Motor neuron (in vitro differentiated cells): ENCODE measurements at regions of chr14 and their contacts with region 1.

Region 1: DNA sequence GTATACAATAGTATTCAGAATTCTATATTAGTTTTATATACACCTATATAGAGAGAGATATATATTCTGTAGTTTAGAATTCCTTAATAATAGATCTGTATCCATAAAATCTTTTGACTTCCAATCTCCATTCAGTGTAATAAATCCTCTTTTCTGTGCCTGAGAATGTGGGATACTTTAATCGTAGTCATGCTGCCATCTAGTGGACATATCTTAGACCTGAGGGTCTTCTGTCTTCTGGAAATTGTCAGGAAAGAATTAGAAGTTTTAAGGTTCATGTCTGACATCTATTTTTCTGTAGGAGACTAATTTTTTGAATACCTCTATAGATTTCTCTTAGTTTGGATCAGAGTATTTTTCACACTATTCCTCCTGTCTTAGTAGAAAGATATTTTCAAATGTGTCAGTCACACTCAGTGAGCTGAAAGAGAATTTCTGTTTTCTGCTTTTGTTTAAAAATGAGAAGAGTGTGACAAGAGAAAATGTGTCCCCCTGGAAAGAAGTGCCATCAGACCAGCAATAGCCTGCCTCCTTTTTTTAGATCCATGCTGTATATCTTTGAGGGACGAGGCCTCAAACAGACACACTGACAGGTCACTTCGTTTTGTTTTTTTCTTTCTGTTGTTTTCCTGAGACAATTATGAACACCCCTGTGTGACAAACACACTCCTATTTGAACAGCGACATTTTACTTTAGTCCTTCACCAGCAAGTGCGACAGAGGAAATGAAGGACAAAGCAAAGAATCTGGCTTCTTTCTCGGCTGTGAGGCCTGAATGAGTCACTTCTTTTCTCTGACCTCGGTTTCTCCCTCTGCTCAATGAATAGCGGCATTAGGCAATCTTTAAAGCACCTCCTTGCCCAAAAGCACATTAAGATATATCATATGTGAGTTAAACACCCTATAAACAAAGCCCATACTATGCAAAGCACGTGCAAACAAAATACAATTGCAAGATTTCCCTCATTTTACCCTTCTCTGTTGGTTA is 96.3 kb downstream of the GALC start:
- ATAC-seq: peak; percentile 47 to 83 (median 66)
- H3K4me3 ChIP-seq: no peak overlapping the region
- H3K27ac ChIP-seq: no peak overlapping the region
- H3K4me1 ChIP-seq: peaks cover 0 to 5% of the 10 kb centered on the region in 2 donors

Region 2: DNA sequence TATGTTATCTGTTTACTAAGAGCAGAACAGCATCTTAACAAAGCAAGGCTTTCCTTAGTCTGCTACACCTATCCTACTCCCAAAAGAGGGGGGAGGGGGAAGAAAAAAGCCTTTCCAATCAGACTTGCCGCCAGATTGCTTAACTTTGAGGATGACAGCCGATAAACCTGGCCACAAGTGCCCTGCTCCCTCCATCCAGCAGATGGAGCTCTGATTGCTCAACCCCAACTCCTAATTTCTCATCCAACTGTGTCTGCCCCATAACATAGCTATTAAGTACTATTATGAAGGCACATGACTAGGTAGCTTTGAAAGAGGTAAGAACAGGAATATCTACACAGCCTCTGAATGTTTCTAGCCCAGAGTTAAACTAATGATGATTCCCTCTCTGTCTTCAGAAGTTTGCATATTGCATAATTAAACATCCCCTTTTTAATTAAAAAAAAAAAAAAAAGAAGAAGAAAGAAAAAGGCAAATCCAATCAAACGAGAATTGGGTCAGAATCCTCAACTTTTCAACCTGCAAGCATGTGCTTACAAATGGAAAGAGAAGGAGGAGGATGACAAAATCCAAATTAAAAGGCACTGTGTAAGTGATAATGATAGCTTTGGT is 151.1 kb before region 1 on chr14:
- in situ Hi-C with region 1: loop called in 1 of 9 experiments (anchors 25 kb)
- ATAC-seq: peak in 2 of 8 experiments; percentile 65 to 90
- H3K4me3 ChIP-seq: no peak overlapping the region
- H3K27ac ChIP-seq: no peak overlapping the region
- H3K4me1 ChIP-seq: peaks cover 0 to 15% of the 10 kb centered on the region in 2 donors

Region 3: GRCh38 chr14:87805315-87805723 is 91.4 kb before region 1 on chr14:
- in situ Hi-C with region 1: loop called in 1 of 9 experiments (anchors 5 kb)
- ATAC-seq: peak in 3 of 8 experiments; percentile 76 to 87 (median 85)
- H3K4me3 ChIP-seq: no peak overlapping the region
- H3K27ac ChIP-seq: no peak overlapping the region
- H3K4me1 ChIP-seq: peaks cover 2 to 7% of the 10 kb centered on the region in 2 donors

Region 4: DNA sequence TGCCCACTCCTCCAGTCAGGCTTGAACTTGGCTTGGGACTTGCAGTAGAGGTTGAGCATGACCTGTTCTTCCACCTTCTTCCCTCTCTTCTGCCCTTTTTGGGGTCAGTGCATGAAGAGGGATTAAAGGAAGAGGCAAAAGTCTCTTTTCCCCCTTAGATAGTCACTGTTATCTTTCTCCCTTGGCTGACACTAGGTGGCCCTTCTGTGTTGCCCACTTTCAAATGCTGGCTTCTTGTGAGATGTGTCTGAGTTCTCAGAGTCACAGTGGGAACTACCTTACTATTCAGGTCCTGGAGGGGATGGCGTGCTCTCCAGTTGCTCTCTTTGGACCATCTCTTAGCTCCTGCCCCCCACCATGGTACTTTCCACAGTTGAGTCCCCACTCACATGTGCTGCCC is 181.8 kb after region 1 on chr14:
- in situ Hi-C with region 1: no loop called
- ATAC-seq: no peak
- H3K4me3 ChIP-seq: no peak overlapping the region
- H3K27ac ChIP-seq: no peak overlapping the region
- H3K4me1 ChIP-seq: no peaks in the 10 kb centered on the region